ENCODE measurements at regions of chr7 and their contacts with region 1.

Region 1: GRCh38 chr7:16645593-16646471 is at the starts of genes ANKMY2 and BZW2:
- DNase-seq: peak; percentile 96
- ATAC-seq: peak; percentile 74
- H3K4me3 ChIP-seq: peak within 1 kb of the TSS; percentile 95
- H3K27ac ChIP-seq: peak within 1 kb of the TSS; percentile 50
- H3K4me1 ChIP-seq: peaks cover 38% of the 10 kb centered on the region
- H3K27me3 ChIP-seq: no peaks in the 10 kb centered on the region
- CTCF ChIP-seq: no peak
- total RNA-seq, gene ANKMY2: 7.7 and 8.5 TPM in 2 replicates
- total RNA-seq, gene BZW2: 86.1 and 94.1 TPM in 2 replicates

Region 2: GRCh38 chr7:16431646-16432424 is 214.0 kb before region 1 on chr7:
- CTCF ChIA-PET with region 1: no interaction called
- POLR2A ChIA-PET with region 1: no interaction called
- intact Hi-C with region 1: loop called (anchors 2 kb)
- DNase-seq: peak; percentile 64
- ATAC-seq: peak; percentile 64
- H3K4me3 ChIP-seq: no peak overlapping the region
- H3K27ac ChIP-seq: no peak overlapping the region
- H3K4me1 ChIP-seq: peaks cover 26% of the 10 kb centered on the region
- H3K27me3 ChIP-seq: no peaks in the 10 kb centered on the region
- CTCF ChIP-seq: peak; percentile 77

Region 3: GRCh38 chr7:16668049-16668858 is 22.4 kb after region 1 on chr7:
- CTCF ChIA-PET with region 1: interaction called, 6 read pairs
- POLR2A ChIA-PET with region 1: interaction called, 3 read pairs
- intact Hi-C with region 1: loop called (anchors 1 kb)
- DNase-seq: peak; percentile 99
- ATAC-seq: peak; percentile 97
- H3K4me3 ChIP-seq: peak overlapping the region; percentile 33
- H3K27ac ChIP-seq: peak overlapping the region; percentile 96
- H3K4me1 ChIP-seq: peaks cover 35% of the 10 kb centered on the region
- H3K27me3 ChIP-seq: no peaks in the 10 kb centered on the region
- CTCF ChIP-seq: no peak; the same call in 1 of the 2 replicates

Region 4: DNA sequence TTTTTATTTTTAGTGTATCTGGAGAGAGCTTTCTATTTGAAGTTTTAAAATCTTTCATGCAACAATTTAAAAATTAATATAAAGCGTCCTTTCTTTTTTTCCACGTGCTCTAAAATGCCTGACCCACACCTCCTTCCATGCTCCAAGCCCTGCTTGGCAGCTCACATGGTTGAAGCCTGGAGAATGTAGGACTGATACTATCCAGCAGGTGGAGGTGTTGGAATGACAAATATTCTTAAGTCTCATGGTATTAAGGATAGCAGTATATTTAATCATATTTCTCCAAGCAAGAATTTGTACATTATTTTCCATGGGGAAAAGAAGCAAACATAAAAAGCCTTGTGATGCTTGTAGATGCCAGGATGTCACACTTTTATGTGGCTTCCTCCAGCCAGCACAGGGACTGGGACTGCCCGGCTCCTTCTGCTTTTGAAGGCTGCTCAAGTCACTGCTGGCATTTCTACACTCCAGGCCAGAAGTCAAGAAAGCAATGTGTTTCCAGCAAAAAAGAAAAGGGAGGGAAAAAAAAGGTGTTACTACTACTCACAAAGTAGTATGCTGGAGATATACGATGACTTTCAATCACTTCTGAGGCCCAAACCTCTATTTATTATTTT is 49.9 kb after region 1 on chr7:
- CTCF ChIA-PET with region 1: no interaction called
- POLR2A ChIA-PET with region 1: no interaction called
- intact Hi-C with region 1: loop called (anchors 2 kb)
- DNase-seq: peak; percentile 80
- ATAC-seq: peak; percentile 69
- H3K4me3 ChIP-seq: no peak overlapping the region
- H3K27ac ChIP-seq: no peak overlapping the region
- H3K4me1 ChIP-seq: peaks cover 32% of the 10 kb centered on the region
- H3K27me3 ChIP-seq: no peaks in the 10 kb centered on the region
- CTCF ChIP-seq: peak; percentile 74

Region 5: DNA sequence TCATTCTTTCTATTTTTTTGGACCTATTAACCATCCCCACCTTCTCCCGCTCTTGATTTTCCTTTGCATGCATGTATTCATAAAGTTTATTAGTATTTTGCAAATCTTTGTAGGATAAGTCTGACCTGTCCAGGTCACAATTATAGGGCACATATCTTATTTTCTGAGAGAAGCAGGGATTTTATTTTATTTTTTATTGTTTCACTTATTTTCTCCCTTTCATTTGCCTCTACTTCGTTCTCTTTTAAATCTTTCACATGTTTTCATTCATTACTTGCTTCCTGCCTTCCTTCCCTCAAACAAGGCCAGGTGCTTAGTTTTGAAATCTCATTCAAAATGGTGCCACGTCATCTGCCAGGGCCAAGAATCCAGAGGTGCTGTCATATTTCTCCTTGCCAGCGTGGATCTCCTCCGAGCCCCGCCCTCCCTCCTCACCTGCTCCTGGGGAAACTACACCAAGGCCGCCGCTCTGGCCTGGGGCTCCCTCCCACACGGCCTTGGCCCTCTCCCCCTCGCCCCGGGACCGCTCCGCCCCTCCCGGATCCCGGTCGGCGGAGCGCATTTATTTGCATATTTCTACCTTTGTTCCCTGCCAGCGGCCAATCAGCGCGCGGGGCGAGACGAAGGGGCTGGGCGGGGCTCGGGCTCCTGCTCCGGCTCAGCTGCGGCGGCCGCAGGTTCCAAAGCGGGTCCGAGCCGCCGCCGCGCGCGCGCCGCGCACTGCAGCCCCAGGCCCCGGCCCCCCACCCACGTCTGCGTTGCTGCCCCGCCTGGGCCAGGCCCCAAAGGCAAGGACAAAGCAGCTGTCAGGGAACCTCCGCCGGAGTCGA is 107.5 kb after region 1 on chr7 and contains the start of gene TSPAN13:
- CTCF ChIA-PET with region 1: no interaction called
- POLR2A ChIA-PET with region 1: no interaction called
- intact Hi-C with region 1: loop called (anchors 1 kb)
- DNase-seq: peak; percentile 95
- ATAC-seq: peak; percentile 87
- H3K4me3 ChIP-seq: peak within 1 kb of the TSS; percentile 88
- H3K27ac ChIP-seq: peak within 1 kb of the TSS; percentile 51
- H3K4me1 ChIP-seq: peaks cover 28% of the 10 kb centered on the region
- H3K27me3 ChIP-seq: no peaks in the 10 kb centered on the region
- CTCF ChIP-seq: no peak
- total RNA-seq, gene TSPAN13: 27.6 and 34.9 TPM in 2 replicates

Region 6: GRCh38 chr7:16795624-16796023 is 149.8 kb after region 1 on chr7:
- CTCF ChIA-PET with region 1: no interaction called
- POLR2A ChIA-PET with region 1: no interaction called
- intact Hi-C with region 1: no loop called
- DNase-seq: no peak
- ATAC-seq: no peak
- H3K4me3 ChIP-seq: no peak overlapping the region
- H3K27ac ChIP-seq: no peak overlapping the region
- H3K4me1 ChIP-seq: peaks cover 16% of the 10 kb centered on the region
- H3K27me3 ChIP-seq: no peaks in the 10 kb centered on the region
- CTCF ChIP-seq: no peak